Aorta (tissue), 5 donors: ENCODE measurements at regions of chr3 and their contacts with region 1.

Region 1: DNA sequence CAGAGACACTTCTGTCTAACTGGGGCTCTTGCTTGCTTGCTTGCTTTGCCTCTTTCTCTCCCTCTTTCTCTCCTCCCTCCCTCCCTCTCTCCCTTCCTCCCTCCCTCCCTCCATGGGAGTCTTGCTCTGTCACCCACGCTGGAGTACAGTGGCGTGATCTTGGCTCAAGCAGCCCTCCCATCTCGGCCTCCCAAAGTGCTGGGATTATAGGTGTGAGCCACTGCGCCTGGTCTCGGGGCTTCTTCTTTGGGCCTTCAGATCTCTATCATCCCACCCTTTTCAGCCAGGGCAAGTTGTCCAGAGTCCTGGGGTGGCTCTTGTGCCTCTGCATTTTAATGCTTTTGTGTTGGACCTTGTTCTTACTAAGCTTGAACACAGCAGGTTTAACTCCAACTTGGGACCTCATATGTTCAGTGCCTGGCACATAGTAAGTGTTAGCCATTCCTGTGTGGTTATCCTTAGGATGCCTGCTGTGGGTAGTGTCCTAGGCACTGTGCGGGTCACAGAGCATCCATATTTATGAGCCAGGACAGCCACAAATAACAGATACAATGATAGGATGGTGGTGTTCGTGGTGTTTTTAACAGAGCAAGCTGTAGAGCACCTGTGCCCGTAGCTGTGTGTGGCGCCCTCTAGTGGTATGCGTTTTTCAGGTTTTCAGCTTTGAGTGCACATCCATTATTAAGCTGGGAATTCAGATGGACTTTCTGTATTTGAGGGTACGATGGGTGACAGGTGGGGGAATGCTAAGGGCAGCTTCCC is 75.1 kb downstream of the CCK start:
- DNase-seq: peak; percentile 48 to 68
- ATAC-seq: peak; percentile 58
- H3K4me3 ChIP-seq: no peak overlapping the region
- H3K27ac ChIP-seq: no peak overlapping the region
- H3K4me1 ChIP-seq: no peaks in the 10 kb centered on the region
- H3K27me3 ChIP-seq: no peaks in the 10 kb centered on the region

Region 2: GRCh38 chr3:41683666-41684350 is 507.1 kb before region 1 on chr3:
- intact Hi-C with region 1: no loop called
- DNase-seq: no peak
- ATAC-seq: no peak
- H3K4me3 ChIP-seq: no peak overlapping the region
- H3K27ac ChIP-seq: no peak overlapping the region
- H3K4me1 ChIP-seq: no peaks in the 10 kb centered on the region
- H3K27me3 ChIP-seq: no peaks in the 10 kb centered on the region

Region 3: GRCh38 chr3:41893977-41894376 is 296.9 kb before region 1 on chr3:
- intact Hi-C with region 1: loop called (anchors 2 kb)
- DNase-seq: no peak
- ATAC-seq: no peak
- H3K4me3 ChIP-seq: no peak overlapping the region
- H3K27ac ChIP-seq: no peak overlapping the region
- H3K4me1 ChIP-seq: no peaks in the 10 kb centered on the region
- H3K27me3 ChIP-seq: no peaks in the 10 kb centered on the region

Region 4: GRCh38 chr3:42317137-42317536 is 126.3 kb after region 1 on chr3:
- intact Hi-C with region 1: no loop called
- DNase-seq: no peak
- ATAC-seq: no peak
- H3K4me3 ChIP-seq: no peak overlapping the region
- H3K27ac ChIP-seq: no peak overlapping the region
- H3K4me1 ChIP-seq: no peaks in the 10 kb centered on the region
- H3K27me3 ChIP-seq: no peaks in the 10 kb centered on the region